CD8-positive, alpha-beta T cell (primary cell): ENCODE measurements at regions of chr3 and their contacts with region 1.

Region 1: DNA sequence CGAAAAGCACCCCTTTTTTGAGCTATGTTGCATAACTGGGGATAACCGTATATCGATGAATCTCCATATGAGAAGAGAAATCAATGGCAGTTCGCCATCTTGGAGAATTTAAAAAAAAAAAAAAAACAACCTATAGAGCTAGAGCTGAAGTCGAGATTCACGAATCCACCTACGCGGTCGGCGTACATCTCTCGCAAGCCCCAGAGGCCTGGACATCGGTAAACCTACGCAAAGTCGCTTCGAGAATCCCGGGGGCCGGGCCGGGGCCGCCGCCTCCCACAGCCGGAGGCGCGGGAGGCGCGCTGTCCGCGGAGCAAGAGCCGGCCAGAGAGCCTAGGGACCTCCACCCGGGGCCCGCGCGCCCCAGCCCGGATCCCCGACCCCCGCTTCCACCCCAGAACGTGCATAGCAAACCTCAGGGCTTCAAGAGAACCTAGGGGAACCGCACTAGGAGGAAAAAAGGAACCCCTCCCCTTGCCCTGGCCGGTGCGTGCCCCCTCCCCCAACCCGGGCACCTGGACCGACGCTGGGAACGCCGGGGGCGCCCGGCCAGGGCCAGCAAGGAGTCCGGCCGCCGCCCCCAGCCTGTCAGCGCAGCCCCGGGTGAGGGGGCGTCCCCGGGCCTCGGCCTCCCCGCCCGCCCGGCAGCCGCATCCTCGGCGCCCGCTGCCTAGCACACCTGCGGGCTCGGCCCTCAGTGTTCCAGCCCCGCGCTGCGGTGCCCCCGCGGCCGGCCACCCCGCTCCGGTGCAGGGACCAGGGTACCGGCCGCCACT is 567 bp downstream of the PFN2 start:
- DNase-seq: peak; percentile 59 to 90 (median 82)
- ATAC-seq: peak; percentile 56
- H3K4me3 ChIP-seq: peak overlapping the region; percentile 63 to 68
- H3K4me3 Mint-ChIP-seq: peak overlapping the region; percentile 95
- H3K27ac ChIP-seq: peak overlapping the region in 1 of 2 experiments; percentile 16
- H3K27ac Mint-ChIP-seq: peak overlapping the region; percentile 88
- H3K4me1 ChIP-seq: peaks cover 10% of the 10 kb centered on the region
- H3K4me1 Mint-ChIP-seq: peaks cover 23% of the 10 kb centered on the region
- H3K27me3 ChIP-seq: peaks cover 0 to 3% of the 10 kb centered on the region in 2 experiments
- H3K27me3 Mint-ChIP-seq: peaks cover 3% of the 10 kb centered on the region
- CTCF ChIP-seq: no peak

Region 2: DNA sequence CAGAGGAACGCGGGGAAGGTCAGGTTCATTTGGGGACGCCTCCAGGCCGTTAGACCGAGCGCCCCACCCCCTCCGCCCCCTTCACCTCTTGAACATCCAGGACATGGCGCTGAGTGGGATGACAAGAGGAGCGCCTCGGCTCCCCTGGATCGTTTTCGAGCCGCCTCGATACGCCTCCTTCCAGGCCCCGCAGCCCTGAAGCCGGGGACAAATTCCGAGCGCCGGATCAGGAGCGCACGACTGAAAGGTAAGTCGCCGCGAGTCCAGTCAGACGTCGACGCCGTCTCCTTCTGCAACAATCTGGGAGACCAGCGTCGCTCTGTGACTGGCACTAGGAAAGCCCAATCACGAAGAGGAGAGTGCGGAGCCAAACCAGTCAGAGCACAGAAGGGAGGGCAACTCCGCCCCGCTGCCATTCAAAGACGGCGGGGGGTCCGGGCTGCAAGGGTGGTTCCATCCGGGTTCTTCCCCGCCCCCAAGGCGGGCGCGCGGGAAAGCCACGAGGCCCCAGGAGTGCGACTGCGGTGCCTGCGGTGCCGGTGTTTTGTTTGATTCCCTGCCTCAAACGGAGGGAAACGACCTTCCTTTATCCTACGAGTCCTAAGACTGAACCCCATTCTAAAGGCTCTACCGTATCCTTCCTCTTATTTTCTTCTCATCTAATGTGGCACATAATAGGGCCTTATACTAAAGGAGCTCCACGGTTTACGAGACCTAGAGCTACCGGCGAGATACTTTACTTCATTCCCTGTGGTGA is 883.7 kb before region 1 on chr3 and contains the start of gene HLTF:
- CTCF ChIA-PET with region 1: no interaction called
- POLR2A ChIA-PET with region 1: no interaction called
- intact Hi-C with region 1: loop called in 1 of 2 experiments (anchors 10 kb)
- DNase-seq: peak; percentile 82 to 97 (median 92)
- ATAC-seq: peak; percentile 98
- H3K4me3 ChIP-seq: peak within 1 kb of the TSS; percentile 87 to 94
- H3K4me3 Mint-ChIP-seq: peak within 1 kb of the TSS; percentile 99
- H3K27ac ChIP-seq: peak within 1 kb of the TSS; percentile 57 to 63
- H3K27ac Mint-ChIP-seq: peak within 1 kb of the TSS; percentile 92
- H3K4me1 ChIP-seq: peaks cover 13% of the 10 kb centered on the region
- H3K4me1 Mint-ChIP-seq: peaks cover 21% of the 10 kb centered on the region
- H3K27me3 ChIP-seq: no peaks in the 10 kb centered on the region
- H3K27me3 Mint-ChIP-seq: no peaks in the 10 kb centered on the region
- CTCF ChIP-seq: no peak
- total RNA-seq, gene HLTF: 4.6 to 6.3 TPM

Region 3: DNA sequence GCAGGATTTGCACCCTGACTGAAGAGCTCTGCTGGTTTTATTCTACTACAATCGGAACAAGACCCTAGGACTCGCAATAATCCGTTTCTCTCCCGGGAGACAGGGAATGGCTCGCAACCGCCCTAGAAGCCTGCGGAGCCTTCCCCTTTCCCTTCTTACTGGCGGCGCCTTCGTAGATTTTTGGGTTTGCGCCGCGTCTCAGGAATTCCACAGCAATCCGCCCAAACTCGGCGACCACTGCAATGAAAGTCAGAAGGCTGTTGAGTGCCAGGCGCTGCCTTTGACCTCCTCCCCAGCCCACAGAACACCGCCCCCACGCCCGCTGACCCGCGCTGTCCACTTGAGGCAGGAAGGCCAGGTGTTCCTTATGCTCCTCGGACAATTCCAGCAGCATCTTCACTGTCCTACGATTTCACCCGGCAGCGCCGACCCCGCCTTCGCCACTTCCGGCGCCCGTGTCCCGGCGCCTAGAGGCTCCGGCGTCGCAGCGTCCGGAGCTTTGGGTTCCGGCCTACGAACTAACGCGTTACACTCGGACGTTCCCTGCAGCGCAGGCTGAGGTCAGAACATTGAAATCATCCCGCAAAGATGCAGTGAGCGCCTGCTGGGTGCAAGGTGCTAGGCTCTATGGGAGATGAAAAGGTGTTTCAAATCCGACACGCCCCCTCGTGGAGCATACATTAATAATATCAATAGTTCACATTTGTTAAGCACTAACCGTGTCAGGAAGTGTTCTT is 217.9 kb before region 1 on chr3 and contains the start of gene COMMD2:
- CTCF ChIA-PET with region 1: no interaction called
- POLR2A ChIA-PET with region 1: no interaction called
- intact Hi-C with region 1: loop called in 1 of 2 experiments (anchors 5 kb)
- DNase-seq: peak; percentile 49 to 88 (median 68)
- ATAC-seq: peak; percentile 89
- H3K4me3 ChIP-seq: peak within 1 kb of the TSS; percentile 80 to 82
- H3K4me3 Mint-ChIP-seq: peak within 1 kb of the TSS; percentile 97
- H3K27ac ChIP-seq: peak within 1 kb of the TSS; percentile 74 to 79
- H3K27ac Mint-ChIP-seq: peak within 1 kb of the TSS; percentile 97
- H3K4me1 ChIP-seq: peaks cover 20% of the 10 kb centered on the region
- H3K4me1 Mint-ChIP-seq: peaks cover 45% of the 10 kb centered on the region
- H3K27me3 ChIP-seq: no peaks in the 10 kb centered on the region
- H3K27me3 Mint-ChIP-seq: peaks cover 2% of the 10 kb centered on the region
- CTCF ChIP-seq: peak; percentile 55
- total RNA-seq, gene COMMD2: 59.1 to 59.6 TPM

Region 4: DNA sequence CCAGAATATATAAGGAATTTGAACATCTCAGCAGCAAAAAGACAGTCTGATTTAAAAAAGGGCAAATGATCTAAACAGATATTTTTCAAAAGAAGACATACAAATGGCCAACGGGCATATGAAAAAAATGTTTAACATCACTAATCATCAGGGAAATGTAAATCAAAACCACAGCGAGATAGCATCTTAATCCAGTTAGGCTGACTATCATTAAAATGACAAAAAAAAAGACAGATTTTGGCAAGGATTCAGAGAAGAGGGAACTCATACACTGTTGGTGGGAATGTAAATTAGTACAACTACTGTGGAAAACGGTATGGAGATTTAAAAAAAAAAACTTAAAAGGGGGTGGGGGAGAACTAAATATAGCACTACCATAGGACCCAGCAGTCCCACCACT is 109.2 kb before region 1 on chr3:
- CTCF ChIA-PET with region 1: no interaction called
- POLR2A ChIA-PET with region 1: no interaction called
- intact Hi-C with region 1: no loop called
- DNase-seq: no peak
- ATAC-seq: no peak
- H3K4me3 ChIP-seq: no peak overlapping the region
- H3K4me3 Mint-ChIP-seq: no peak overlapping the region
- H3K27ac ChIP-seq: no peak overlapping the region
- H3K27ac Mint-ChIP-seq: no peak overlapping the region
- H3K4me1 ChIP-seq: no peaks in the 10 kb centered on the region
- H3K4me1 Mint-ChIP-seq: peaks cover 8% of the 10 kb centered on the region
- H3K27me3 ChIP-seq: no peaks in the 10 kb centered on the region
- H3K27me3 Mint-ChIP-seq: no peaks in the 10 kb centered on the region
- CTCF ChIP-seq: no peak

Region 5: DNA sequence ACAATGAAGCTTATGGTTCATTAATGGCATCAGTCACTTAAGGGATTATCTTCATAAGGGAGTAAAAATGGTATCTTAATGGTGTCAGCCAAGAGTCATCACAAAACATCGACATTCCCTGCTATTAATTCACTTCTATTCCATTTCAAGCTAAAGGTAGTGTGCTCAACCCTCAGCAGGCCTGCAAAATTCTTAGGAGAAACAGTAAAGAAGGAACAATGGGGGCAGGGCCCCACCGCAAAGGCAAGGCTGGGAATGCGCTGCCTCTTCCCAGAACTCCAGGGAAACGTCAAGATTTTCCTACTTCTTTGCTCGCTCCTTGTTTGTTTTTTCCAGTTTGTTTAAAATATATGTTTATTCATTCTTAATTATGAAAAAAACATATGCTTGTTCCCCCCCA is 250.7 kb after region 1 on chr3:
- CTCF ChIA-PET with region 1: interaction called, 18 read pairs
- POLR2A ChIA-PET with region 1: no interaction called
- intact Hi-C with region 1: loop called (anchors 1 kb)
- DNase-seq: no peak
- ATAC-seq: no peak
- H3K4me3 ChIP-seq: no peak overlapping the region
- H3K4me3 Mint-ChIP-seq: no peak overlapping the region
- H3K27ac ChIP-seq: no peak overlapping the region
- H3K27ac Mint-ChIP-seq: no peak overlapping the region
- H3K4me1 ChIP-seq: peaks cover 5% of the 10 kb centered on the region
- H3K4me1 Mint-ChIP-seq: peaks cover 6% of the 10 kb centered on the region
- H3K27me3 ChIP-seq: peaks cover 5 to 10% of the 10 kb centered on the region in 2 experiments
- H3K27me3 Mint-ChIP-seq: peaks cover 45% of the 10 kb centered on the region
- CTCF ChIP-seq: no peak

Region 6: GRCh38 chr3:150546226-150547044 is 576.3 kb after region 1 on chr3 and contains the starts of genes EIF2A and SERP1:
- CTCF ChIA-PET with region 1: no interaction called
- POLR2A ChIA-PET with region 1: interaction called, 7 read pairs
- intact Hi-C with region 1: loop called in 1 of 2 experiments (anchors 1 kb)
- DNase-seq: peak; percentile 99 to 100 (median 99)
- ATAC-seq: peak; percentile 88
- H3K4me3 ChIP-seq: peak within 1 kb of the TSS; percentile 61 to 84
- H3K4me3 Mint-ChIP-seq: peak within 1 kb of the TSS; percentile 97
- H3K27ac ChIP-seq: peak within 1 kb of the TSS; percentile 91 to 98
- H3K27ac Mint-ChIP-seq: peak within 1 kb of the TSS; percentile 99
- H3K4me1 ChIP-seq: peaks cover 36% of the 10 kb centered on the region
- H3K4me1 Mint-ChIP-seq: peaks cover 74% of the 10 kb centered on the region
- H3K27me3 ChIP-seq: no peaks in the 10 kb centered on the region
- H3K27me3 Mint-ChIP-seq: no peaks in the 10 kb centered on the region
- CTCF ChIP-seq: no peak
- total RNA-seq, gene EIF2A: 156 to 162 TPM
- total RNA-seq, gene SERP1: 143 to 151 TPM